PC-9 (cell line): ENCODE measurements at regions of chr3 and their contacts with region 1.

Region 1: DNA sequence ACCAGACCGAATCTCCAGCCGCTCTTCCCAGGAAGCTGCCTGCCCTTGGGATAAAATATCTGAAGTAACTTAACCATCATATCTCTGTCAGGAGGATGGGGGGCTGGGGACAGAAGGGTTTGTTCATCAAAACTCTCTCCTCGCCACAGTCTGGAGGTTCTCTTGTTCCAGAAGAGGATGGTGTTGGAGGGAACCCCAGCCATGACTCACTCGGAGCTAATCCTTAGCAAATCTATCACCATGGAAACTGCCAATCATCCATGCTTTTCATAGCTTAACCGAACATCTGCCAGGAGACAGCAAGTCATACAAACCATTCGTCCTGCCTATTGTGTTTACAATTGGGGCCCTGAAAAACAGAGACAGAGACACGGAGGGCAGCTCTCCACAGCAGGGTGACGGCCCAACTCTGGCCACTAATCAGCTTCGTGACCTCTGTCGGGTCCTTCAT is 73.7 kb upstream of the HEG1 start:
- DNase-seq: peak; percentile 72 to 81
- H3K4me3 ChIP-seq: no peak overlapping the region
- H3K27ac ChIP-seq: peak overlapping the region; percentile 87
- H3K4me1 ChIP-seq: peaks cover 53% of the 10 kb centered on the region
- H3K27me3 ChIP-seq: no peaks in the 10 kb centered on the region
- CTCF ChIP-seq: no peak

Region 2: DNA sequence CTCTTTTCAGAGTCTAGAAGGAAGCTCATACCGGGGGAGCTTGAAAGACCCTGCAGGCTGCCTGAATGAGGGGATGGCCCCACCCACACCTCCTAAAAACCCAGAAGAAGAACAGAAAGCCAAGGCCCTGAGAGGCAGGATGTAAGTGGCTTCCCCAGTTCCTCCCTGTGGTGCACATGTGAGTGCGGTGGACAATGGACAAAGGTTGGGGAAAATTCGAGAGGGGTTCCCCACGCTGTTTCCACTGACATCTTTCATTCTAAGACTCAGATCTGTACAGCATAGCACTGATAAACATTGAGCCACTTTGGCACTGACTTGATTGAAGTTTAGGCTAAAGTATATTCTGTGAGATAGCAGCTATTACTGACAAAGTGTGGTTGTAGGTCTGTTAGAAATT is 478.7 kb before region 1 on chr3:
- CTCF ChIA-PET with region 1: no interaction called
- POLR2A ChIA-PET with region 1: no interaction called
- intact Hi-C with region 1: no loop called
- DNase-seq: no peak
- H3K4me3 ChIP-seq: no peak overlapping the region
- H3K27ac ChIP-seq: no peak overlapping the region
- H3K4me1 ChIP-seq: no peaks in the 10 kb centered on the region
- H3K27me3 ChIP-seq: no peaks in the 10 kb centered on the region
- CTCF ChIP-seq: no peak

Region 3: DNA sequence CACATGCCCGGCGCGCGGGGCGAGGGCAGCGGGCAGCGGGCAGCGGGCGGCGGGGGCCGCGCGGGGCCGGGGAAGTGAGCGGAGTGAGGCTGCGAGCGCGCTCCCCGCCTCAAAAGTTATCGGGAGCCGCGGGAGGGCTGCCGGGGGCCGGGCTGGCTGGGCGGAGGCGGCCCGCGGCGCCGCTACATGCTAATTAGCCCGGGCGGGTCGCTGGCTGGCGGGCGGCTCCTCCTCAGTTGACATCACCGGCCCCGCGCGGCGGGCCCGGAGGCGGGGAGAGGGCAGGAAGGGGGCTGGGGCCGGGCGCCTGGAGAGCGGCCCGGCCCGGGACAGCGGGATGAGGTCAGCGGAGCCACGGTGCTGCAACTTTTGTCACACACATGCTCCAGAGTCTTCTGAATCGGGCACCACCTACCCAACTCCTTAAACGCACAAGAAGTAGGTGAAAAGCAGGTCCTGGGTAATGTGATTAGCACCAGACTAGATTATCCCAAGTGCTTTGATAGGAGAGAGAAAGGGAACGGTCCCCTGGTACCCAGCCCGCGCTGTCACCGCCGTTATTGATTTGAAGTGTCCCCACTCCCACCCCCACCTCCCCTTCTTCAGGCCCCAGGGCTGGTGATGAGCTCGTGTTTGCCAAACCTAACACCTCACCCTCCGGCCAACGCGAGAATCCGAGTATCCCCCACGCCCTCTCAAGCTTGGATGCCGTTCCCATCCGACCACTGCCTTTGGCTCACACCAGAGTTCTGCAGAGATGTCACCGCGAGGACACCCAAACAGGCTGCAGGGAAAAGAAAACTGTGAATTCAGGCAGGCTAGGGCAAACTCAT is 73.4 kb before region 1 on chr3 and contains the start of gene HEG1:
- CTCF ChIA-PET with region 1: no interaction called
- POLR2A ChIA-PET with region 1: no interaction called
- intact Hi-C with region 1: loop called (anchors 1 kb)
- DNase-seq: peak; percentile 51 to 85
- H3K4me3 ChIP-seq: peak within 1 kb of the TSS; percentile 61
- H3K27ac ChIP-seq: no peak within 1 kb of the TSS
- H3K4me1 ChIP-seq: peaks cover 49% of the 10 kb centered on the region
- H3K27me3 ChIP-seq: no peaks in the 10 kb centered on the region
- CTCF ChIP-seq: no peak
- total RNA-seq, gene HEG1: 30.2 and 33.5 TPM in 2 replicates

Region 4: GRCh38 chr3:125116311-125117080 is 13.0 kb before region 1 on chr3:
- CTCF ChIA-PET with region 1: interaction called, 3 read pairs
- POLR2A ChIA-PET with region 1: interaction called, 9 read pairs
- intact Hi-C with region 1: loop called (anchors 1 kb)
- DNase-seq: peak; percentile 77 to 84
- H3K4me3 ChIP-seq: no peak overlapping the region
- H3K27ac ChIP-seq: peak overlapping the region; percentile 81
- H3K4me1 ChIP-seq: peaks cover 26% of the 10 kb centered on the region
- H3K27me3 ChIP-seq: no peaks in the 10 kb centered on the region
- CTCF ChIP-seq: no peak

Region 5: DNA sequence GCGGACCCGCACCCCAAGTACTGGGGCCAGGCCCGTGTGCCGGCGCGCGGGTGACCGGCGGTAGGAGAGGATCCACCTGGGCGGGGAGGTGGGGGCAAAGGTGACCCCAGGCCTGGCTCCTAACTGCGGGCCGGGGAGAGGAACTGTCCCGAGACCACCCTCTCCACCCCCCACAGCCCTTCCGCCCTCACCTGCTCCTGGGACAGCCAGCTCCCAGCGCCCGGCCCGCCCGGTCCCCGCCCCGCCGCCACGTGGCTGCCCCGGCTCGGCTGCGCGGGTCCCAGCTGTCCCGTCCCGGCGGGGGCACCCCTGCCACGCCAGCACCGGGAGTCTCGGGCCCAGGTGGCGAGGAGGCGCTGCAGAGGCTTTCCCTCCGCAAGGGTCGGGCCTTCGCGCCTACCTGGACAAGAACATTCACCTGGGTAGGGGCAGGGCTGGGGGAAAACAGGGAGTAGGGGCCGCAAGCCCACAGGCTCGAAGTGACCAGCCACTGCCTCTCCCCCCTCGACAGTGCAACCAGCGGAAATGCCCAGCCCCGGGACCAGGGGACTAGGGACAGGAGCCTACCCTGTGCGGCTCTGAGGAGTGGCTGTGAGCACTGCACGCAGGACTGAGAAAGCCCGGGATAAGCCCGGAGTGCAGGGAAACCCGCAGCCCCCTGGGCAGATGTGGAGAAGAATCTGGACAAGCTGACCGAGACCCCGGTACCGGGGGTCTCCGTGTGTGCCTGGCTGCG is 83.1 kb after region 1 on chr3 and contains the start of gene SLC12A8:
- CTCF ChIA-PET with region 1: no interaction called
- POLR2A ChIA-PET with region 1: interaction called, 17 read pairs
- intact Hi-C with region 1: loop called (anchors 5 kb)
- DNase-seq: peak in 1 of 2 experiments; percentile 43
- H3K4me3 ChIP-seq: peak within 1 kb of the TSS; percentile 68
- H3K27ac ChIP-seq: no peak within 1 kb of the TSS
- H3K4me1 ChIP-seq: 0 out of 2 replicates have a peak, but pooled peaks cover 17% of the 10 kb centered on the region
- H3K27me3 ChIP-seq: no peaks in the 10 kb centered on the region
- CTCF ChIP-seq: no peak
- total RNA-seq, gene SLC12A8: 30.7 and 42.9 TPM in 2 replicates

Region 6: DNA sequence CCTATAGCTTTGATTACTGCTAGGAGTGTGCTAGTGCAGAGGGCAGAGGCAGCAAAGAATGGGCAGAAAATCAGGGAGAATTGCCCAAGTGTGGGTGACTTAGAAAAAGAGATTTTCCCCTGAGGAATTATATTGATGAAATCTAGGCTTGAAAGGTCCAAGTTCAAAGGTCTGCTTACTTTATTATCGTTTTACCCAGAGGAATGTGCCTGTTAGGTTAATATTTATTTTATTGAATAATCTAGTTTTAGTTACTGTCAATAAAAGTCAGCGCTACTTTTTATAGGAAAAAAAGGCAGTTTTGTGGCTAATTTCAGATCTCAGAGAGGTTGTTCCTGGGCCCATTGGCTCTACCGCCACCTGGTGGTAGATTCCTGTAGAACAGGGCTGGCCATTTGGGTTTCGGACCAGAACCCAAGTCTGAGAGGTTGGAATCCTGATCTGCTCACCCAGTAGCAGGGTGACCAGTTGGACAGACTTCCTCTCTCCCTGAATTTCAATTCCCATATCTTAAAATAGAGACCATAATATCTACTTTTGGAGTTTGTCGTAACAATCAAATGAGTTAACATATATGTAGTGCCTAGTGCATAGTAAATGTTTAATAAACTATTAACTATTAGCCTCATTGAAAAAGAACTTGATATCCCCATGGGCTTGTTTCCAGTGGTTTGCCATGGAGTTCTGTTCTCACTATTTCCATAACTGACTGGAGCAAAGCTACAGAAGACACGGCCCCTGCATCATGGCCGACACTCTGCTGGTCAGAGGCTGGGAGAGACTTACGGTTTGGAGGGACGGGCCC is 308.3 kb after region 1 on chr3:
- CTCF ChIA-PET with region 1: interaction called, 9 read pairs
- POLR2A ChIA-PET with region 1: no interaction called
- intact Hi-C with region 1: loop called (anchors 10 kb)
- DNase-seq: peak in 1 of 2 experiments; percentile 51
- H3K4me3 ChIP-seq: no peak overlapping the region
- H3K27ac ChIP-seq: no peak overlapping the region
- H3K4me1 ChIP-seq: peaks cover 8% of the 10 kb centered on the region
- H3K27me3 ChIP-seq: no peaks in the 10 kb centered on the region
- CTCF ChIP-seq: peak; percentile 99